Cardiac septum (tissue), 1 donor: ENCODE measurements at regions of chr3 and their contacts with region 1.

Region 1: GRCh38 chr3:50299929-50300685 is 902 bp upstream of the HYAL3 start:
- DNase-seq: no peak

Region 2: GRCh38 chr3:50138266-50139200 is 161.6 kb before region 1 on chr3:
- intact Hi-C with region 1: no loop called
- DNase-seq: no peak

Region 3: GRCh38 chr3:50337191-50337841 is 37.2 kb after region 1 on chr3:
- intact Hi-C with region 1: loop called (anchors 5 kb)
- DNase-seq: peak; percentile 100

Region 4: GRCh38 chr3:50550079-50550741 is 250.1 kb after region 1 on chr3:
- intact Hi-C with region 1: no loop called
- DNase-seq: peak; percentile 81